Stomach (tissue), 19 donors: ENCODE measurements at regions of chr4 and their contacts with region 1.

Region 1: GRCh38 chr4:44927399-44928380 is 201.3 kb upstream of the GNPDA2 start:
- DNase-seq: peak in 1 of 2 donors; percentile 52
- H3K4me3 ChIP-seq: no peak overlapping the region
- H3K27ac ChIP-seq: no peak overlapping the region
- H3K4me1 ChIP-seq: peaks cover 0 to 12% (median 0%) of the 10 kb centered on the region in 4 donors
- H3K27me3 ChIP-seq: no peaks in the 10 kb centered on the region
- CTCF ChIP-seq: peak in 4 of 7 experiments; percentile 38 to 66 (median 58)
- EP300 ChIP-seq: no peak
- POLR2A ChIP-seq: no peak

Region 2: GRCh38 chr4:45442466-45442865 is 514.8 kb after region 1 on chr4:
- intact Hi-C with region 1: loop called (anchors 10 kb)
- DNase-seq: peak in 1 of 2 donors; percentile 6
- H3K4me3 ChIP-seq: no peak overlapping the region
- H3K27ac ChIP-seq: no peak overlapping the region
- H3K4me1 ChIP-seq: no peaks in the 10 kb centered on the region
- H3K27me3 ChIP-seq: no peaks in the 10 kb centered on the region
- CTCF ChIP-seq: peak in 4 of 7 experiments; percentile 16 to 48 (median 36)
- EP300 ChIP-seq: no peak
- POLR2A ChIP-seq: no peak